ENCODE measurements at regions of chr16 and their contacts with region 1.

Region 1: GRCh38 chr16:22217889-22218730 is 12.0 kb downstream of the EEF2K start:
- DNase-seq: peak in 1 of 2 donors; percentile 57
- ATAC-seq: peak in 1 of 2 donors; percentile 14
- H3K4me3 ChIP-seq: no peak overlapping the region
- H3K27ac ChIP-seq: peak overlapping the region; percentile 90 to 95 (median 94)
- H3K4me1 ChIP-seq: peaks cover 61 to 64% of the 10 kb centered on the region in 2 donors
- H3K27me3 ChIP-seq: no peaks in the 10 kb centered on the region
- CTCF ChIP-seq: no peak
- POLR2A ChIP-seq: peak in 1 of 2 donors; percentile 10

Region 2: GRCh38 chr16:21523411-21524067 is 694.6 kb before region 1 on chr16:
- in situ Hi-C with region 1: no loop called
- intact Hi-C with region 1: loop called (anchors 10 kb)
- DNase-seq: no peak
- ATAC-seq: no peak
- H3K4me3 ChIP-seq: no peak overlapping the region
- H3K27ac ChIP-seq: no peak overlapping the region
- H3K4me1 ChIP-seq: no peaks in the 10 kb centered on the region
- H3K27me3 ChIP-seq: no peaks in the 10 kb centered on the region
- CTCF ChIP-seq: no peak
- POLR2A ChIP-seq: no peak

Region 3: GRCh38 chr16:22297114-22297878 is 79.2 kb after region 1 on chr16 and contains the start of gene POLR3E:
- in situ Hi-C with region 1: no loop called
- intact Hi-C with region 1: loop called (anchors 1 kb)
- DNase-seq: peak; percentile 98 to 99
- ATAC-seq: peak; percentile 77 to 79
- H3K4me3 ChIP-seq: peak within 1 kb of the TSS; percentile 87 to 97 (median 94)
- H3K27ac ChIP-seq: peak within 1 kb of the TSS; percentile 97 to 100 (median 98)
- H3K4me1 ChIP-seq: peaks cover 12 to 18% of the 10 kb centered on the region in 2 donors
- H3K27me3 ChIP-seq: no peaks in the 10 kb centered on the region
- CTCF ChIP-seq: peak; percentile 93 to 98 (median 98)
- POLR2A ChIP-seq: peak; percentile 88 to 90
- total RNA-seq, gene POLR3E: 105 to 182 (median 116) TPM

Measured in gastrocnemius medialis (tissue), 4 donors.